Upper lobe of right lung (tissue), 1 donor: ENCODE measurements at regions of chr2 and their contacts with region 1.

Region 1: DNA sequence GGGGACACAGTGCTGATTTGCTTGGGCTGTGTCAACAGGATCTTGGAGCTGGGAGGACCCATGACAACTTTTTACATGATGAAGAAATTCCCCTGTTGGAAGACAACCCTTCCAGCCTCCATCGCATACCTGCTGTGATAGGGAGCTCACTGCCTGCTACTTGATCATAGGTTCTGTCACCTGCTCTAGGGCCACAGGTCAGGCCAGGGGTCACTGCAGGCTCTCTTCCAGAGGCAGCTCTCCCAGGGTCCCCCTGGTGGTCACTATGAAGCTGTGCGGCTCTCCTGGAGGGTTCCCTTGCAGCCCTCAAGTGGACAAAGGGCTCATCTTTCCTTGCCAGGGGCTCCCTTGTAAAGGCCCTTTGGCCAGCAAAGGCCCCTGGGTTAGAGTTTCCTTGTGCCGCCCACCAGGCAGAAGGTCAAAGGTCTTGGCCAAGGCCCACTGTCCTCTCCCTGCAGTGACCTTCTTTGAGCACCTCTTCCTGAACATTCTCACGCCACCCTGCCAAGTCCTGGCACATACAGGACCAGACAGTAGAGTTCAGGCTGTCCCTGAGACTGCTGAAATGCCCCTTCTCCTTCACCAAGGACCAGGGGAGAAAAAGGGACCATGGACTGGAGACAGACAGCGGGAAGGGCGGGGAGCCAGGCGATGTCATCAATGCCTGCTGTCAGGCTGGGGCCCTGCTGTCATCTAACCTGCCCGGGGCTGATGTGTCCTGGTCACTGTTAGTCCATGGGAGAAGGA is 345.1 kb downstream of the DYSF start:
- DNase-seq: no peak
- ATAC-seq: peak; percentile 66
- H3K4me3 ChIP-seq: no peak overlapping the region
- H3K27ac ChIP-seq: no peak overlapping the region
- H3K4me1 ChIP-seq: no peaks in the 10 kb centered on the region
- H3K27me3 ChIP-seq: no peaks in the 10 kb centered on the region
- CTCF ChIP-seq: peak; percentile 75

Region 2: GRCh38 chr2:71385012-71385411 is 413.4 kb before region 1 on chr2:
- intact Hi-C with region 1: no loop called
- DNase-seq: no peak
- ATAC-seq: no peak
- H3K4me3 ChIP-seq: no peak overlapping the region
- H3K27ac ChIP-seq: no peak overlapping the region
- H3K4me1 ChIP-seq: no peaks in the 10 kb centered on the region
- H3K27me3 ChIP-seq: no peaks in the 10 kb centered on the region
- CTCF ChIP-seq: no peak

Region 3: DNA sequence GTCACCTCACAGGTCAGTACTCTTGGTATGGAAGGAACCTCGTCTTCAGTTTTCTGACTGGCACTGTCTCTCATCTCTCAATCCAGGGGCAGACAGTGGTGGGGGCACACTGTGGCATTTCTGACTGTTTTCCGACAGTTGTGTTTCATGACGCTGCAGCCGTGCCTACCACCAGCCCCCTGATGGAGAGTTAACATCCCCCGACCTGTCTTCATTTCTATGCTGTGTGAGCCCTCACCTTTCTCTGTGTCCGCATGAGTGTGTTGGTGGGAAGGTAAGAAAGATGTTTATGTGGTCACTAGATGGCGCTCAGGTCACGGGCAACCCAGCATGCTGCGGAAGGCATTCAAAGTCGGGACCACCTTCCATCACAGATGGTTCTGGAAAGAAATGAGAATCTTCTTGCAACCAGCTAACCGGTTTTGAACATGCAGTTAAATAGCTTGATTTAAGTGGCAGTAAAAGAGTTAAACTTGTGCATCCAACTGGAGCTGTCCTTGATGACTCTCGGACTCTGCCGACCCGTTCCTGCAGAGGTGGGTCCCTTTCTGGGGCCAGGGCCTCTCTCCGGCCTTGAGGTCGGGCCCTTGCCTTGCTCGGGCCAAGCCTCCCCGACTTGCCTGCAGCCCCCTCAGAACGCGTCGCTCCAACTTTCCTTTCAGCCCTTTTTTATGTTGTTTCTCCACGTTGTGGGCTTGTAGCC is 252.7 kb before region 1 on chr2:
- intact Hi-C with region 1: loop called (anchors 10 kb)
- DNase-seq: peak; percentile 49
- ATAC-seq: peak; percentile 78
- H3K4me3 ChIP-seq: peak overlapping the region; percentile 5
- H3K27ac ChIP-seq: peak overlapping the region; percentile 15
- H3K4me1 ChIP-seq: peaks cover 12% of the 10 kb centered on the region
- H3K27me3 ChIP-seq: no peaks in the 10 kb centered on the region
- CTCF ChIP-seq: peak; percentile 65

Region 4: DNA sequence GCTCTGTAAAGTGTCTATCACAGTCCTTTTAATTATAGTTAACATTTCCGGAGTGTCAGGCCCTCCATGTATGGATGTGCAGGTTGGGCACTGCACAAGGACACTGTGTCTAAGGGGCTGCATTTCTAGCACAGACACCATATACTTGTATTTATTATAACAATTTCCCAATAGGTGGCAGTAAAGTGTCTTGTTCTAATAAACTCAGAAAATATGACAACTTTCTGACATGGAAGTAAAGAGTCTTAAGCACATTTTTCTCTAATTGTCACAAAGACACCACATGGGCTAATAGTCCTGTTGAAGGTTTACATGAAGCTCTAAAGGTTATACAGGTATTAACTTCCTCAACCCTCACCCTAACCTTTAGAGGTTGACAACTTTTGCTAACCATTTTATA is 188.5 kb before region 1 on chr2:
- intact Hi-C with region 1: loop called (anchors 10 kb)
- DNase-seq: no peak
- ATAC-seq: no peak
- H3K4me3 ChIP-seq: no peak overlapping the region
- H3K27ac ChIP-seq: no peak overlapping the region
- H3K4me1 ChIP-seq: peaks cover 13% of the 10 kb centered on the region
- H3K27me3 ChIP-seq: no peaks in the 10 kb centered on the region
- CTCF ChIP-seq: peak; percentile 42

Region 5: DNA sequence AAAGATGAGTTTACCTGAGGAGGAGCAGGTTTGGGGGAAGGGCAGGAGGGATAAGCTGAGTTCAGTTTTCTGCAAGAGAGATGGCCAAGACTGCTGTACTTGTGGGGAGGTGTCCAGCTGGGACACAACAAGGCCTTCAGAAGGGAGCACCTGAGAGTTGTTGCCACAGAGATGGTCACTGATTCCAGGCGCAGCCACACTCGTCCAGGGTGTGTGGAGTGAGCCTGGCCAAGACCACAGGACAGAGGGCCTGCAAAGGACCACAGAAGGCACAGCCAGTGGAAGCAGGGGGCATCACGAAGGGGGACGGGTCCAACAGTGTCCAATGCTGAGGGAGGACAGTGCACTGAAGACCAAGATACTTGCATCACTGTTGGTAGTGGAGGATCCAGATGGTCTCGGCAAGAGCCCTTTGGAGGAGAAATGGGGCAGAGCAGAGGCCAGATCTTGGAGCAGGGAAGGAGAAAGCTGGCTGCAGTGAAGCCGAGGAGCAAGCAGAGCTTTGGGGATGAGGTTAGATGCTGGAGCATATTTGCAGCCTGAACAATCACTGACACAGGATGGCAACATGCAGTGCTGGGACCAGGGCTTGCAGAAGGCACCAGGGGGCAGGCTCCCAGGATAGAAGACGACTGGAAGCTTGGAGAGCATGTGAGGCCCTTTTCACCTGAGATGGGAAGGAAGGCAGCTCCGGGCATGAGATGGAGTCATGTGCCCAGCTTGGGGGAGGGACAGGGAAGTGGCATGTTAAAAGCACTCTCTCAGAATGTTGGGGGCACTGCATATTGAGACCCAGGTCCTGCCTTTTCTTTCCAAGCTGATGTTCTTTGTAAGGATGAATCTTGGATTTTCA is 135.3 kb after region 1 on chr2:
- intact Hi-C with region 1: no loop called
- DNase-seq: peak; percentile 46
- ATAC-seq: no peak
- H3K4me3 ChIP-seq: no peak overlapping the region
- H3K27ac ChIP-seq: no peak overlapping the region
- H3K4me1 ChIP-seq: no peaks in the 10 kb centered on the region
- H3K27me3 ChIP-seq: no peaks in the 10 kb centered on the region
- CTCF ChIP-seq: no peak